Sigmoid colon (tissue), 7 donors: ENCODE measurements at regions of chr11 and their contacts with region 1.

Region 1: GRCh38 chr11:46346886-46347636 is at the start of gene DGKZ:
- DNase-seq: peak; percentile 93
- H3K4me3 ChIP-seq: peak within 1 kb of the TSS; percentile 78 to 92 (median 82)
- H3K27ac ChIP-seq: peak within 1 kb of the TSS; percentile 55 to 67 (median 62)
- H3K4me1 ChIP-seq: peaks cover 0 to 38% (median 29%) of the 10 kb centered on the region in 4 donors
- H3K27me3 ChIP-seq: no peaks in the 10 kb centered on the region
- CTCF ChIP-seq: peak in 2 of 4 experiments; percentile 9 to 74
- EP300 ChIP-seq: no peak
- POLR2A ChIP-seq: no peak
- total RNA-seq, gene DGKZ: 22.5 to 76.7 (median 34.2) TPM

Region 2: GRCh38 chr11:46367244-46367915 is 20.3 kb after region 1 on chr11:
- intact Hi-C with region 1: loop called (anchors 1 kb)
- DNase-seq: peak; percentile 86
- H3K4me3 ChIP-seq: no peak overlapping the region
- H3K27ac ChIP-seq: peak overlapping the region in 1 of 4 donors; percentile 25
- H3K4me1 ChIP-seq: peaks cover 0 to 30% (median 25%) of the 10 kb centered on the region in 4 donors
- H3K27me3 ChIP-seq: no peaks in the 10 kb centered on the region
- CTCF ChIP-seq: peak; percentile 67 to 92 (median 88)
- EP300 ChIP-seq: no peak
- POLR2A ChIP-seq: no peak